MCF 10A (cell line): ENCODE measurements at regions of chr14 and their contacts with region 1.

Region 1: DNA sequence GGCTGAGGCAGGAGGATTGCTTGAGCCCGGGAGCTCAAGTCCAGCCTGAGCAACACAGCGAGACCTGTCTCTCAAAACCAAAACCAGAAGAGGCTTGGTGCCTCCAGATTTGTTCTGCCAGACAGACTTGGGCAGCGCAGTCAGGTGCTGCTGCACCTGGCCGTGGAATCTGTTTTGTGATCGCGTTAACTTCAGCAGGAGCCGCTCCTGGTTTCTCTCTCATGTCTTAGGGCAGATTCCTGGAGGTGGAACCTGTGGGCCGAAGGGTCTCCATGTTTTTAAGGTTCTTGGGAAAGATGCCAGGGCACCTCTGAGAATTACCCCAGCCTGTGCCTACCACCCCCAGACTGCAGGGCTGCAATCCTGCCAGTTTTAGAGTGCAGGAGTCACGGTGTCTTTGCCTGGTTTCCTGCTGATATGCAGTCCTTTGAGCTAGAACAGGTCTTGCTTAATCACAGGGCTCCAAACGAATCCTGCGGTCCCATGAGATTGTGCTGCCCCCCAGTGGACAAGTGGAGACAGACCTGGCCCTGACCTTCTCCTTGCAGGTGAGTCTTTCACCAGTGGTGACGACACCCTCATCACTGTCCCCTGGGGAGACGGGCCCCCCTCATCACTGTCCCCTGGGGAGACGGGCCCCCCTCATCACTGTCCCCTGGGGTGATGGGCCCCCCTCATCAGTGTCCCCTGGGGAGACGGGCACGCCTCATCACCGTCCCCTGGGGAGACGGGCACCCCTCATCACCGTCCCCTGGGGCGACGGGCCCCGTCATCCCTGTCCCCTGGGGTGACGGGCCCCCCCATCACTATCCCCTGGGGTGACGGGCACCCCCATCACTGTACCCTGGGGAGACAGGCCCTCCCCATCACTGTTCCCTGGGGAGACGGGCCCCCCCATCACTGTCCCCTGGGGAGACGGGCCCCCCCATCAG is 37.6 kb downstream of the PACS2 start:
- DNase-seq: peak; percentile 94
- H3K4me3 Mint-ChIP-seq: no peak overlapping the region
- H3K27ac Mint-ChIP-seq: no peak overlapping the region
- H3K4me1 Mint-ChIP-seq: no peaks in the 10 kb centered on the region
- H3K27me3 Mint-ChIP-seq: no peaks in the 10 kb centered on the region
- CTCF ChIP-seq: peak; percentile 88

Region 2: DNA sequence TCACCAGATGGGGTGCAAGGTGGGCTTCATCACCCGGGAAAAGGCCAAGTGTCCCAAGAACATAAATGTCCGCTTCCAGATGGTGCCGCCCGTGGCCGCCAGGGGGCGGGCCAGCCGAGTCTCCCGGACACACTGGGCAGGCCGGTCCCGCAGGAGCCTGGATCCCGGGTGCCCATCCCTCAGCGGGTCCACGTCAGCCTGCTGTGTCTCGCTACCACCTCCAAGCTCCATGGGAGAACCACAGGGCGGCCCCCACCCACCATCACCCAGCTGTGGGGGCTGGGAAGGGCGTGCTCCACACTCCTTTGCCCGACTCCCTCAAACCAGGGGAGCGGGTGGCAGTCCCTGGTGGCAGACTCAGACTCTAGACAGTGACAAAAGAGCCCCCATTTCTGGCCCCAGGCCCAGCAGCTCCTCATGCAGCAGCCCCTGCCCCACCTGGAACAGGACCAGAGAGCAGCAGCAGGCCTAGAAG is 149.1 kb before region 1 on chr14:
- CTCF ChIA-PET with region 1: interaction called, 4 read pairs
- POLR2A ChIA-PET with region 1: interaction called, 3 read pairs
- intact Hi-C with region 1: loop called (anchors 1 kb)
- DNase-seq: peak; percentile 63
- H3K4me3 Mint-ChIP-seq: no peak overlapping the region
- H3K27ac Mint-ChIP-seq: no peak overlapping the region
- H3K4me1 Mint-ChIP-seq: peaks cover 16% of the 10 kb centered on the region
- H3K27me3 Mint-ChIP-seq: peaks cover 29% of the 10 kb centered on the region
- CTCF ChIP-seq: peak; percentile 89

Region 3: GRCh38 chr14:105281371-105282097 is 70.7 kb before region 1 on chr14:
- CTCF ChIA-PET with region 1: interaction called, 14 read pairs
- POLR2A ChIA-PET with region 1: no interaction called
- intact Hi-C with region 1: loop called (anchors 5 kb)
- DNase-seq: peak; percentile 73
- H3K4me3 Mint-ChIP-seq: no peak overlapping the region
- H3K27ac Mint-ChIP-seq: no peak overlapping the region
- H3K4me1 Mint-ChIP-seq: peaks cover 6% of the 10 kb centered on the region
- H3K27me3 Mint-ChIP-seq: no peaks in the 10 kb centered on the region
- CTCF ChIP-seq: peak; percentile 62

Region 4: DNA sequence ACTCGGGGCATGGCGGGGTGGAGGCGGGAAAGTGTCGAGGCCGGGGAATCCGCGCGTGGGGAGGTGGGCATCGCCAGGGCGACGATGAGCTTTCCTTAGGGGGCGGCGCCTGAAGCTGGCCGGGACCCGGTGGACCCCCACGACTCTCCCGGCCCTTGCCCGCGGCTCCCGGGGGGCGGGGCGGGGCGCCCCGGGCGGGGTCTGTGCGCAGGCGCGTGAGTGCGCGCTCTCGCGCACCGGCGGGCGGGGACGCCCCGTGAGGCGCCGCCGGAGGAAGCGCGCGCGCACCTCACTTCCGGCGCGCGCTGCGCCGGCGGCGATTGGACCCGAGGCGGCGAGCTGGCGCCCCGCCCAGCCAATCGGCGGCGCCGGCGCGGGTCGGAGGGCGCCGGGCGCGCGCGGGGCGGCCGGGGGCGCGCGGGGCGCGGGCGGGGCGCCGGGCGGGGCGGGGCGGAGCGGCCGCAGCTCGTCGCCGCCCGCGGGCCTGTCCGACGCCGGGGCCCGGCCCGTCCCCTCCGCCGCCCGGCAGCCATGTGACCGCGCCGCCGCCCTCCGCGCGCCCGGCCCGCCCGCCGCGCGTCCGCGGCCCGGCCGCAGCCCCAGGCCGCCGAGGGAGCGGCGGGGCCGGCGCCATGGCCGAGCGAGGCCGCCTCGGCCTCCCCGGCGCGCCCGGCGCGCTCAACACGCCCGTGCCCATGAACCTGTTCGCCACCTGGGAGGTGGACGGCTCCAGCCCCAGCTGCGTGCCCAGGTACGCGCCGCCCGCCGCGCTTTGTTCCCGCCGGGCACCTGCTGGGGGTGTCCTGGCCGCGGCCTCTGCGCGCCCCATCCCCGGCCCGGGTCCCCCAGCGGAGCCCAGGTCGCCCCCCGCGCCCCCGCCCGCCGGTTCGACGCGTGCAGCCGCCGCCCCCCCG is 37.6 kb before region 1 on chr14 and contains the start of gene PACS2:
- CTCF ChIA-PET with region 1: interaction called, 6 read pairs
- POLR2A ChIA-PET with region 1: interaction called, 3 read pairs
- intact Hi-C with region 1: loop called (anchors 5 kb)
- DNase-seq: peak; percentile 72
- H3K4me3 Mint-ChIP-seq: peak within 1 kb of the TSS; percentile 84
- H3K27ac Mint-ChIP-seq: peak within 1 kb of the TSS; percentile 3
- H3K4me1 Mint-ChIP-seq: peaks cover 6% of the 10 kb centered on the region
- H3K27me3 Mint-ChIP-seq: no peaks in the 10 kb centered on the region
- CTCF ChIP-seq: no peak
- total RNA-seq, gene PACS2: 49.7 and 57.7 TPM in 2 replicates

Region 5: GRCh38 chr14:105340821-105341733 is 11.1 kb before region 1 on chr14:
- CTCF ChIA-PET with region 1: interaction called, 11 read pairs
- POLR2A ChIA-PET with region 1: no interaction called
- intact Hi-C with region 1: no loop called
- DNase-seq: no peak
- H3K4me3 Mint-ChIP-seq: no peak overlapping the region
- H3K27ac Mint-ChIP-seq: no peak overlapping the region
- H3K4me1 Mint-ChIP-seq: no peaks in the 10 kb centered on the region
- H3K27me3 Mint-ChIP-seq: no peaks in the 10 kb centered on the region
- CTCF ChIP-seq: no peak